ENCODE measurements at regions of chr1 and their contacts with region 1.

Region 1: GRCh38 chr1:224458996-224459395 is 24.4 kb upstream of the WDR26 start:
- DNase-seq: no peak
- H3K4me3 Mint-ChIP-seq: no peak overlapping the region
- H3K27ac Mint-ChIP-seq: no peak overlapping the region
- H3K4me1 Mint-ChIP-seq: peaks cover 24% of the 10 kb centered on the region
- H3K27me3 Mint-ChIP-seq: no peaks in the 10 kb centered on the region

Region 2: GRCh38 chr1:224113918-224114786 is 344.8 kb before region 1 on chr1 and contains the start of gene FBXO28:
- CTCF ChIA-PET with region 1: interaction called, 42 read pairs
- POLR2A ChIA-PET with region 1: interaction called, 8 read pairs
- DNase-seq: peak; percentile 94
- H3K4me3 Mint-ChIP-seq: peak within 1 kb of the TSS; percentile 90
- H3K27ac Mint-ChIP-seq: peak within 1 kb of the TSS; percentile 89
- H3K4me1 Mint-ChIP-seq: peaks cover 31% of the 10 kb centered on the region
- H3K27me3 Mint-ChIP-seq: peaks cover 9% of the 10 kb centered on the region
- total RNA-seq, gene FBXO28: 25.5 to 30.6 TPM

Region 3: DNA sequence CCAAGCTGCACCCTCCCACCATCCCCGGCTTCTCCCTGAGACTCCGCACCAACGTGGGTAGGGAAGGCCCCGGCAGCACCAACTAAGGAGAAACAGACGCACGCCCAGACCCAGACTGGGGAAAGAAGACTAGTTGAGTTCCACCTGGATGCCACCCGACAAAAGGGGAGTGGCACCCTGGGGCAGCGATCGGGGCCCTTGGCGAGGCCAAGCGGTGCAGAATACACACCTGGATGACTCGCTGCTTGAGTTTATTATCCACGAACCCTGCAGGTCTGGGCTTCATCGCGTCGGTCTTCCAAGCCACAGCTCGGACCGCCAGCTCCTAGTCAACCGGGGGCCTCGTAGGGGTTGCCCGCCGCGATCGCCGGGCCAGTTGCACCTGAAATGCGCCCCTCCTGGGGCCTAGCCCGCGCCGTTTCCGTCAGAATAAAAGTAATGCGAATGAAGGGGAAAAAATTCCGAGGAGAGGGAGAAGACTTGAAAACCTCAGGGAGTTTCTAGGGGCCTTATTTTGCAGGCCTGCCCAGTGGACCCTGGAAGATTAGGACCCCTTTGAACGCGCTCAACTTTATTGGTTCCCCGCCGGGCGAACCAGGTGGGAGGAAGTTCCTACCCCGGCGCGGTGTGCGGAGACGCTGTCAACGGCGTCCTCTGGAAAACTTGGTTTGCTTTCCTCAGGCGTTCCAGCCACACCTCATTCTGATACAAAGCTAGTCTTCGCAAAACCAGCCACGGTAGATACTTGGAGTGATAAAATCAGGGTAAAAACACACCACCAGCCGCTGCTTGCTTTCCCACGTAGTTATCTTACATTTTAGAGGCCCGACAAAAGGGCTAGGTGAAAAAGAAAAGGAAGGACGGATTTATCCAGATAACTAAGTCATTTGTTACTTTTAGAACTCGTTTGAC is 128.9 kb before region 1 on chr1 and contains the start of gene NVL:
- CTCF ChIA-PET with region 1: interaction called, 14 read pairs
- POLR2A ChIA-PET with region 1: no interaction called
- DNase-seq: peak; percentile 83
- H3K4me3 Mint-ChIP-seq: peak within 1 kb of the TSS; percentile 88
- H3K27ac Mint-ChIP-seq: peak within 1 kb of the TSS; percentile 94
- H3K4me1 Mint-ChIP-seq: peaks cover 58% of the 10 kb centered on the region
- H3K27me3 Mint-ChIP-seq: no peaks in the 10 kb centered on the region
- total RNA-seq, gene NVL: 38.8 to 45.6 TPM

Region 4: DNA sequence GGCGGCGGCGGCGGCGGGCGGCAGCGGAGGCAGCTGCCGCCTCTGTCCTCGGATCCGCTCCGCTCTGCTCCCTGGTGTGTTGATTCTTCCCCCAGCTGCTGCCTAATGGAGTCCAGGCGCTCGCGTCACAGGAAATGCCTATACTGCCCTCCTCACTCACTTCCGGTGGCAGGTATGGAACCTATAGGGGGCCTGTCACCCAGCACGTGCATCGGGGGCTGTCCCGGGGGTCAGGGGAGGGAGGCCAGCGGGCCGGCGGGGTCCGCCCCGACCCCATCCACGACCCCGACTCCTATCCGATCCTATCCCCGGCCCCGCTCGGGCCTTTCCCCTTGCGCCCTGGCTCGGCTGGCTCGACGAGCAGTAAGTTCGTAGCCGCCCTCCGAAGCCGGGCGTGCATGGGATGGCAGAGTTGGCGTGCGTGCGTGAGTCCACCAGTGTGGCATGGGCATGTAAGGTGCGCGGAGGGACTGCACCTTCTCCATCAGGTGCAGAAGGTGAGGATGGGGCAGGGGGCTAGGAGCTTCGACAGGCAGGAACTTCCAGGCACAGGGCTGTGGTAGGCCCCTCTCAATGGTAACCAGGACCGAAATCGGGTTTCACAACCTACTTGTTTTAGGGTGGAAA is 24.2 kb before region 1 on chr1 and contains the start of gene WDR26:
- CTCF ChIA-PET with region 1: interaction called, 27 read pairs
- POLR2A ChIA-PET with region 1: interaction called, 27 read pairs
- DNase-seq: peak; percentile 88
- H3K4me3 Mint-ChIP-seq: peak within 1 kb of the TSS; percentile 93
- H3K27ac Mint-ChIP-seq: peak within 1 kb of the TSS; percentile 95
- H3K4me1 Mint-ChIP-seq: peaks cover 54% of the 10 kb centered on the region
- H3K27me3 Mint-ChIP-seq: no peaks in the 10 kb centered on the region
- total RNA-seq, gene WDR26: 114 to 118 TPM

Region 5: GRCh38 chr1:224447251-224447650 is 11.7 kb before region 1 on chr1:
- CTCF ChIA-PET with region 1: interaction called, 12 read pairs
- POLR2A ChIA-PET with region 1: interaction called, 4 read pairs
- DNase-seq: no peak
- H3K4me3 Mint-ChIP-seq: no peak overlapping the region
- H3K27ac Mint-ChIP-seq: no peak overlapping the region
- H3K4me1 Mint-ChIP-seq: peaks cover 15% of the 10 kb centered on the region
- H3K27me3 Mint-ChIP-seq: no peaks in the 10 kb centered on the region

Region 6: DNA sequence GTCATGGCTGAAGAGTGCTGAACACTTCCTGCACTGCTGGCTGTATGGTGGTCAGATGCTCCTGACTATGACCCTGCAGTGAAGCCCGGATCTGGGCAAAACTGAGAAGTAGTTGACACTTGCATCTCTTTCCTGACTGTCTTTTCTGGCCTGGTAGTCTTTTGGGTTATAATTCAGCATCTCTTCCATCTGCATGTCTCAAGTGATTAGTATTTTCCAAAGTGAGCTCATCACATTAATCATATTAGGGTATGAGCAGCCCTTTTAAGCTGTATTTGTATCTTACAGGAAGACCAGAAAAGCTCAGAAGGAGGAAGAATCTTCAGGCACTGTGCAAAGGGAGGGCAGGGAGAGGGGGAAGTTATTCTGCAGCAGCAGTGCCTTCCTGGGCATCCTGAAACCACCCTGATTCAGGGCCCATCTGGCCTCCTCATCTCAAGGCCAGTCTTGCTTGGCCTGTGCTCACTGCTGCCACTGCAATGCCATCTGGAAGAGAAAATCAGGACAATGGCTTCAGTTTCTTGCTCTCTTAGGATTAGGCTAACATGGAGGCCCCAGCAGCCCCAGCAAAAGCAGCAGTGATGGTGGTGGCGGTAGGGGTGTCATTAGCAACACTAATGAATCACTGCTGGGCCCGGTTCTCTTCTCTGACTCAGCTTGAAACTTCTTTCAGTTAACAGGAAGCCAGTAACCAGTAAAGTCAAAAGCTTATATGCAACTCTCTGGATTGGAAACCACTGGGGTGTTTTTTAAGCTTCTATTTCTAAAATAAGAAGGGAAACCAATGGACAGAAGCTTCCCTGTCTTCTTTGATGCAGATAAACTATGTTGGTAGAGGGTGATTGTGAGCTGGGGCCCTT is 38.9 kb after region 1 on chr1:
- CTCF ChIA-PET with region 1: interaction called, 10 read pairs
- POLR2A ChIA-PET with region 1: interaction called, 3 read pairs
- DNase-seq: peak; percentile 86
- H3K4me3 Mint-ChIP-seq: peak overlapping the region; percentile 52
- H3K27ac Mint-ChIP-seq: peak overlapping the region; percentile 95
- H3K4me1 Mint-ChIP-seq: peaks cover 63% of the 10 kb centered on the region
- H3K27me3 Mint-ChIP-seq: no peaks in the 10 kb centered on the region

Region 7: DNA sequence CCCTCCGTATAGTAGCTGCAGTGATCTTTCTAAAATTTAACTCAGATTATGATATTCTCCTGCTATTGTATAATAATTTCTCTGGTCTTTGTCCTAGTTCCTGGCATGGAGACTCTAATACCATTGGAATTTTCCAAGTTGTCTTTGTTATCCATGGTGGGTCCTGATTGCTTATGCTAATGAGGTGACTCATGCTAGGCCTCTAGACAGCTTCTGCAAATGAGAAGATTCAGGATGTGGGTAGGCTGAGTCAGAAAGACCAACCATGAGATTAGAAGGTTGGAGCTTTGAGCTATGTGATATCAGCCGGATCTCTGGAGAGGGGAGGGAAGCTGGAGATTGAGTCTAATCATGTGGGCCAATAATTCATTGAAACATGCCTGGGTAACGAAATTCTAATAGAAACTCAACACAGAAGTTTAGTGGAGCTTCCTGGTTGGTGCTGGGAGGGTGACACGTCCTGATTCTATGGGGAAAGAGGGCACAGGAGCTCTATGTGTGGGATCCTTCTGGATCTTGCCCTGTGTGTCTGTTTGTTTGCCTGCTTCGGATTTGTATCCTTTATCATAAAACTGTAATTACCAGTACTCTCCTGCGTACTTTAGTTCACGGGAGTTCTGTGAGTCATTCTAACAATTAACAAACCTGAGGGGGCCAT is 83.9 kb after region 1 on chr1:
- CTCF ChIA-PET with region 1: no interaction called
- POLR2A ChIA-PET with region 1: no interaction called
- DNase-seq: peak; percentile 58
- H3K4me3 Mint-ChIP-seq: no peak overlapping the region
- H3K27ac Mint-ChIP-seq: peak overlapping the region; percentile 21
- H3K4me1 Mint-ChIP-seq: peaks cover 27% of the 10 kb centered on the region
- H3K27me3 Mint-ChIP-seq: peaks cover 11% of the 10 kb centered on the region